GM12878 (cell line): ENCODE measurements at regions of chr15 and their contacts with region 1.

Region 1: DNA sequence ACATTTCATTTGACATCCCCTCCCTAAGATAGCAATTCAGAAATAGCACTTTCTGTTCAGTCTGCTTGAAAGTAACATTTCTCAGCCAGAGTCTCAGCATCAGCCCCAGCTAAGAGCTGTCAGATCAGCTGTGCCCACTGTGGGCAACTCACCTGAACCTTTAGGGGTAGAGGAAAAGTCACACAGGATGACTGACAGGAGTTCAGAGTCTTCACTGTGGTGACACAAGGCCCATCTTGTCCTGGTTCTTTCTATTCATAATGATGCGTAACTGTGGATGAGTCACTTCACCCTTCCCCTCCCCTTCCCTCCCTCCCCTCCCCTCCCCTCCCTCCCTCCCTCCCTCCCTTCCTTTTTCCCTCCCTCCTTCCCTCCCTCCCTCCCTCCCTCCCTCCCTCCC is 96.1 kb upstream of the RASGRP1 start:
- DNase-seq: no peak
- ATAC-seq: peak; percentile 67
- H3K4me3 ChIP-seq: no peak overlapping the region
- H3K27ac ChIP-seq: no peak overlapping the region
- H3K4me1 ChIP-seq: no peaks in the 10 kb centered on the region; the same call in 1 of the 2 replicates
- H3K27me3 ChIP-seq: no peaks in the 10 kb centered on the region
- CTCF ChIP-seq: no peak
- EP300 ChIP-seq: no peak
- POLR2A ChIP-seq: no peak
- RAD21 ChIP-seq: no peak

Region 2: DNA sequence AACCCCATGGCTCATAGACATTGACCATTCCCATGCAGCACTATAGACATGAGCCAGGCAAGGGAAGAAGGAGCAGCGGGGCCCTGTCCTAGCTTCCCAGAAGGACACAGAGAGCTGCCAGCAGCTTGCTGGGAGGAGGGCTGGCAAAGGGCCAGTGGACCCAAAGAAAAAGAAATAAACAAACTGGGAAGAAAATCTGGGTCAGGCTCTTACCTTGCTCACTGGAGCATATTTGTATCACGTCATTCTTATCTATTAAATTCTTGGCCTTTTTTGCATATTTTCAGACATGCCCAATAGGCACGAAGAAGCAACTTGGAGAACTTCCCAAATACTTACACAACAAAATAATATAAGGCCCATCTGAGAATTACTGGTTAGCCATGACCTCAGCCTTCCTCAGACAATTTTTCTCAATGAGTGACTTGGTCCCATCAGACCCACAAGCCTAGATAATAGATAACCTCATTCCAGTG is 124.5 kb before region 1 on chr15:
- CTCF ChIA-PET with region 1: no interaction called
- POLR2A ChIA-PET with region 1: no interaction called
- RAD21 ChIA-PET with region 1: no interaction called
- SMC1A ChIA-PET with region 1: no interaction called
- in situ Hi-C with region 1: no loop called
- intact Hi-C with region 1: no loop called
- DNase-seq: no peak
- ATAC-seq: no peak
- H3K4me3 ChIP-seq: no peak overlapping the region
- H3K27ac ChIP-seq: no peak overlapping the region
- H3K4me1 ChIP-seq: no peaks in the 10 kb centered on the region
- H3K27me3 ChIP-seq: no peaks in the 10 kb centered on the region
- CTCF ChIP-seq: no peak
- EP300 ChIP-seq: no peak
- POLR2A ChIP-seq: no peak
- RAD21 ChIP-seq: no peak

Region 3: GRCh38 chr15:38647683-38648082 is 13.1 kb before region 1 on chr15:
- CTCF ChIA-PET with region 1: interaction called, 55 read pairs
- POLR2A ChIA-PET with region 1: interaction called, 119 read pairs
- RAD21 ChIA-PET with region 1: interaction called, 737 read pairs
- SMC1A ChIA-PET with region 1: interaction called, 1,803 read pairs
- in situ Hi-C with region 1: no loop called
- intact Hi-C with region 1: no loop called
- DNase-seq: no peak
- ATAC-seq: no peak
- H3K4me3 ChIP-seq: no peak overlapping the region
- H3K27ac ChIP-seq: no peak overlapping the region
- H3K4me1 ChIP-seq: peaks cover 27% of the 10 kb centered on the region
- H3K27me3 ChIP-seq: no peaks in the 10 kb centered on the region
- CTCF ChIP-seq: peak in 2 of 3 experiments; percentile 5 to 17; a peak in 1 of 6 replicates
- EP300 ChIP-seq: no peak
- POLR2A ChIP-seq: no peak
- RAD21 ChIP-seq: peak; percentile 23; the same call in 1 of the 2 replicates

Region 4: DNA sequence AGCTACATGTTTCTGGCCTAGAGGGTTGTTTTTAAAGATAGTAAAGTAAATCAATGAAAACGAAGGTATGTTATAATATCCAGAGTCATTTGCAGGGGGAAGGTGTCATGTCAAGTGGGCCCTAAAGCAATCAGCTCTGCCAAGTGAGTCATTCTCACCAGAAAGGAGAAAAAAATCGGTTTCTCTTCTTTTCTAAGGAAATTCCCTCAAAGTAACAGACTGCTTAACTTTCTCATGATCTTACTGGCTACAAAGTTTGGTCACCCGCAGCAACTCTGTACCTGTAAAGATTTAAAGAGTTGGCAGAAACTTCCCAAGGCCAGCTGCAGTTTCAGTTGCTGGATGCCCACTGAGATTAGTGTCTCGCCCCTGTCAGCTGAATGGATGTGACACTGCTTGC is 1127.4 kb after region 1 on chr15:
- CTCF ChIA-PET with region 1: no interaction called
- POLR2A ChIA-PET with region 1: no interaction called
- RAD21 ChIA-PET with region 1: no interaction called
- SMC1A ChIA-PET with region 1: no interaction called
- in situ Hi-C with region 1: no loop called
- intact Hi-C with region 1: no loop called
- DNase-seq: no peak
- ATAC-seq: peak; percentile 73
- H3K4me3 ChIP-seq: no peak overlapping the region
- H3K27ac ChIP-seq: no peak overlapping the region
- H3K4me1 ChIP-seq: peaks cover 17% of the 10 kb centered on the region
- H3K27me3 ChIP-seq: no peaks in the 10 kb centered on the region
- CTCF ChIP-seq: no peak
- EP300 ChIP-seq: no peak
- POLR2A ChIP-seq: no peak
- RAD21 ChIP-seq: no peak